ENCODE measurements at regions of chr20 and their contacts with region 1.

Region 1: GRCh38 chr20:47356526-47357295 is at the start of gene ZMYND8:
- DNase-seq: peak; percentile 99
- H3K4me3 Mint-ChIP-seq: peak within 1 kb of the TSS; percentile 81
- H3K27ac Mint-ChIP-seq: peak within 1 kb of the TSS; percentile 94
- H3K4me1 Mint-ChIP-seq: peaks cover 24% of the 10 kb centered on the region
- H3K27me3 Mint-ChIP-seq: no peaks in the 10 kb centered on the region
- total RNA-seq, gene ZMYND8: 37.8 to 44.2 TPM

Region 2: GRCh38 chr20:47213966-47214365 is 142.7 kb before region 1 on chr20:
- CTCF ChIA-PET with region 1: no interaction called
- POLR2A ChIA-PET with region 1: no interaction called
- DNase-seq: no peak
- H3K4me3 Mint-ChIP-seq: no peak overlapping the region
- H3K27ac Mint-ChIP-seq: no peak overlapping the region
- H3K4me1 Mint-ChIP-seq: no peaks in the 10 kb centered on the region
- H3K27me3 Mint-ChIP-seq: no peaks in the 10 kb centered on the region

Region 3: DNA sequence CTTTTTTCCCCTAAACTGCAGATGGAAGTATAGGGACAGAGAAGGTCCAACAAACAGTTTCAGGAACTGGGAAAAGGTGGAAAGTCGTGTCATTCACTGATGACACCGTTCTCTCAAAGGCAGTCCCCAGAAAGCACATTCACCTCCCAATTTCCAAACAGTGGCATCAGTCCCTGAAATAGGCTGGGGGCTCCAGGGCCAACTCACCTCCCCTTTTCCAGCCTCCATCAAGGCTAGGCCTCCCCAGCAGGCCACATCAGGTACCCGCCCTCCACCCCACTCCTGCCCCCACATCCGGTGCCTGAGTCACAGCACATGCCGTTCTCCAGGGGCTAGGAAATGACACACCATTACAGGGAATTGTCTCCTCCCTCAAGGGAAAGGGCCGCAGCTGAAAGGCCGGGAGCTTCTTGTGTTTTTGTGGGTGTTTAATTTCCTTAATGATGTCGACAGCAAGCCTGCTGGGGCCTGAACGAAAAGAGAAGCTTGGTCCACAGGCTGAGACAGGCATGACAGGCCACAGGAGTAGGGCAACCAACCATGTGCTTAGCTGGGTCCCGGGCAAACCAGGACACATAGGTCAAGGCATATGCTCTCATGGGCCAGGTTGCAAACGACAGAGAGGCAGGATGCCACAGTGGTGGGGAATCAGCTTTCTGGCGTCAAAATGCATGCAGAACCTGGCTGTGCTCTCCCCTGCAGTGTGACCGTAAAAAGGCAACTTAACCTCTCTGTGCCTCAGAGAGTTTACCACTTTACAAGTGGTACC is 39.4 kb before region 1 on chr20:
- CTCF ChIA-PET with region 1: no interaction called
- POLR2A ChIA-PET with region 1: interaction called, 12 read pairs
- DNase-seq: peak; percentile 68
- H3K4me3 Mint-ChIP-seq: peak overlapping the region; percentile 48
- H3K27ac Mint-ChIP-seq: peak overlapping the region; percentile 56
- H3K4me1 Mint-ChIP-seq: peaks cover 63% of the 10 kb centered on the region
- H3K27me3 Mint-ChIP-seq: no peaks in the 10 kb centered on the region

Region 4: GRCh38 chr20:47441774-47442150 is 85.1 kb after region 1 on chr20:
- CTCF ChIA-PET with region 1: no interaction called
- POLR2A ChIA-PET with region 1: no interaction called
- DNase-seq: no peak
- H3K4me3 Mint-ChIP-seq: no peak overlapping the region
- H3K27ac Mint-ChIP-seq: no peak overlapping the region
- H3K4me1 Mint-ChIP-seq: peaks cover 11% of the 10 kb centered on the region
- H3K27me3 Mint-ChIP-seq: no peaks in the 10 kb centered on the region